ENCODE measurements at regions of chr4 and their contacts with region 1.

Region 1: DNA sequence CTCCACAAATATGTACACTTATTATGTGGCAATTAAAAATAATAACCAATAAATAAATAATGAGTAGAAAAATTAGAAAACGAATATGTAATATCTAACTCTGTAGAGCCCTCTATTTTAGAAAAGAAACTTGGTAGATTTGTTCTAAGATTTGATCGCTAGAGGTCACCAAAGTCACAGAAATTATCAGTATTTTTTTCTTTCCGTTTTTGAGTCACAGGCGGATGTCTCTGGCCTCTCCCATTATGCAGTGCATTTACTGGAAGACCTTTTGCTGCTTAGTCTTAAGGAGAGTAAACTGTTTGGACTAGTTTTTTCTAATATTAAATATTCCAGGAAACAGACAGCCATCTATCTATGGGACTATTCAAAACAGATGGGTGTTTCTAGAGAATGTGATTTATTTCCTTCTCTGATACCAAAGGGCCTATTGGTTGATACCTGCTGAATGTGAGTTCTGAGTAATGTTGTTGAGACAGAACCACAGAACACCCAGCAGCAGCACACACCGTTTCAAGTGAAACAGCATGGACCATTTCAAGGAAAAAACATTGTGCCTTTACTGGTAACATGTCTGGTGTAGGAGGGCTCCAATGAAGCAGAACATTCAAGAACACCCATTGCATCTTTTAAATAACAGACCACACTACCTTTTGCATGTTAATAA is 34.0 kb upstream of the GYPA start:
- DNase-seq: peak; percentile 19
- H3K4me3 Mint-ChIP-seq: peak overlapping the region; percentile 40
- H3K27ac Mint-ChIP-seq: peak overlapping the region; percentile 70
- H3K4me1 Mint-ChIP-seq: peaks cover 37% of the 10 kb centered on the region
- H3K27me3 Mint-ChIP-seq: peaks cover 4% of the 10 kb centered on the region

Region 2: GRCh38 chr4:144645631-144646522 is 471.3 kb after region 1 on chr4 and contains the start of gene HHIP:
- intact Hi-C with region 1: loop called (anchors 1 kb)
- DNase-seq: no peak
- H3K4me3 Mint-ChIP-seq: peak within 1 kb of the TSS; percentile 88
- H3K27ac Mint-ChIP-seq: no peak within 1 kb of the TSS
- H3K4me1 Mint-ChIP-seq: peaks cover 23% of the 10 kb centered on the region
- H3K27me3 Mint-ChIP-seq: peaks cover 47% of the 10 kb centered on the region
- total RNA-seq, gene HHIP: not detected in 2 replicates

Region 3: GRCh38 chr4:145061318-145061920 is 886.9 kb after region 1 on chr4:
- intact Hi-C with region 1: loop called (anchors 1 kb)
- DNase-seq: no peak
- H3K4me3 Mint-ChIP-seq: no peak overlapping the region
- H3K27ac Mint-ChIP-seq: no peak overlapping the region
- H3K4me1 Mint-ChIP-seq: peaks cover 20% of the 10 kb centered on the region
- H3K27me3 Mint-ChIP-seq: no peaks in the 10 kb centered on the region

Region 4: DNA sequence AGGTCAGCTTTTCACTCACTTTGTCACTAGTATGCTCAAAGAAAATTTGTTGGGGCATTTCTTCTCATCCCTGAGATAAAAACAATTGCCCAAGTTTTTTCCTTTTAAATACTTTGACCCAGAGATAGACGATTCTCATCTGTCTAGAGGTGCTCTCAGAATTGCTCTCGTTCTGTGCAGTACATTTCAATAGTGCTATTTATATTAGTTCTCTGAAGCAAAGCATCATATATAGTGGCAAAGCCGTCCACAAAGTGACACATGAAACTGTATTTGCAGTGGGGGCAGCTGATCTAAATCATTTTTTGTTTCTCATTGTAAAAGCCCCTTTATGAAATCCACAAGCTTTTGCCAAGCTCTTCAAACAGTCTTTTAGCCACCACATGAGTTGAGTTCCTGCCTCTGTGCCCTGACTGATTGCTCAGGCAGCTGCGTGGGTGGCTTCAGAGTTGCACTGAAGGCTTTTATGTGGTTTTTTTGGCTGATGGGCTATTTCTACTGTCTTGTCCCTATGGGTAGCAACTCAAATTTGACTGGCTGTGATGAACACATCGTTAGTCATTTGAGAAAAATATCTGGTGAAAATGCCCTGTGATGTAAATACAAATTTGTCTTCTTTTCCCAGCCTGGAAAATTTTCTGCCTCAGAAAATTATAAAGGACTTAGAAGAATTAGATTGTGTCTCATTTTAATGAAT is 1125.0 kb after region 1 on chr4:
- intact Hi-C with region 1: loop called (anchors 10 kb)
- DNase-seq: peak; percentile 2
- H3K4me3 Mint-ChIP-seq: no peak overlapping the region
- H3K27ac Mint-ChIP-seq: no peak overlapping the region
- H3K4me1 Mint-ChIP-seq: peaks cover 17% of the 10 kb centered on the region
- H3K27me3 Mint-ChIP-seq: peaks cover 6% of the 10 kb centered on the region

Region 5: GRCh38 chr4:145557720-145558119 is 1383.2 kb after region 1 on chr4:
- intact Hi-C with region 1: loop called (anchors 1 kb)
- DNase-seq: peak; percentile 26
- H3K4me3 Mint-ChIP-seq: no peak overlapping the region
- H3K27ac Mint-ChIP-seq: no peak overlapping the region
- H3K4me1 Mint-ChIP-seq: peaks cover 1% of the 10 kb centered on the region
- H3K27me3 Mint-ChIP-seq: no peaks in the 10 kb centered on the region

Measured in activated T-helper 1 cell treated with anti-CD3 and anti-CD28 coated beads, Interleukin-12 subunit alpha, Interleukin-12 subunit beta, Interleukin-2, Interleukin-4 antibody, amounts not matched to agents 30 ng/mL and 10 ng/mL and 1 ng/mL, durations not matched to agents 14 hours and 24 hours and 36 hours (primary cell).